ENCODE measurements at regions of chr4 and their contacts with region 1.

Region 1: DNA sequence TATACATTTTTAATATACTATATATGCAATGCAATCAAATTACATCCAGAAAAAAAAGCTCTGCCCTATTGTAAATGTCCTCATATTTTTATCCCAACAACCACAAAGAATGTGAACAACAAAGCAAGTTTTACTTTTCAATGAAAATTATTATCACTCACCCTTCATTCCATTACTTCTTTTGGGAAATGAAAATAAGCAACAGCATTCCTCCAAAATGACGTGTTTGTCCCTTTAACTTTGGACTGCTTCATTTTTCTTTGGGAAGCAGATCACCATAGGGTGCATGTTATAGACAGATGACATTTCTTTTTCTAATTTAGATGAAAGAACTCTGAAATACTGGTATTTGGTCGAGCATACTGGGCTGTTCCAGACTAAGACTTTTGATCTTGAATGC is 667.1 kb upstream of the BOD1L1 start:
- DNase-seq: no peak
- H3K4me3 ChIP-seq: no peak overlapping the region
- H3K27ac ChIP-seq: no peak overlapping the region
- H3K4me1 ChIP-seq: peaks cover 6% of the 10 kb centered on the region
- H3K27me3 ChIP-seq: no peaks in the 10 kb centered on the region
- CTCF ChIP-seq: no peak

Region 2: GRCh38 chr4:13944095-13944511 is 350.5 kb before region 1 on chr4:
- CTCF ChIA-PET with region 1: no interaction called
- dilution Hi-C with region 1: no loop called
- in situ Hi-C with region 1: no loop called
- intact Hi-C with region 1: loop called (anchors 1 kb)
- DNase-seq: peak; percentile 96
- H3K4me3 ChIP-seq: no peak overlapping the region
- H3K27ac ChIP-seq: no peak overlapping the region
- H3K4me1 ChIP-seq: peaks cover 15% of the 10 kb centered on the region
- H3K27me3 ChIP-seq: no peaks in the 10 kb centered on the region
- CTCF ChIP-seq: no peak

Region 3: DNA sequence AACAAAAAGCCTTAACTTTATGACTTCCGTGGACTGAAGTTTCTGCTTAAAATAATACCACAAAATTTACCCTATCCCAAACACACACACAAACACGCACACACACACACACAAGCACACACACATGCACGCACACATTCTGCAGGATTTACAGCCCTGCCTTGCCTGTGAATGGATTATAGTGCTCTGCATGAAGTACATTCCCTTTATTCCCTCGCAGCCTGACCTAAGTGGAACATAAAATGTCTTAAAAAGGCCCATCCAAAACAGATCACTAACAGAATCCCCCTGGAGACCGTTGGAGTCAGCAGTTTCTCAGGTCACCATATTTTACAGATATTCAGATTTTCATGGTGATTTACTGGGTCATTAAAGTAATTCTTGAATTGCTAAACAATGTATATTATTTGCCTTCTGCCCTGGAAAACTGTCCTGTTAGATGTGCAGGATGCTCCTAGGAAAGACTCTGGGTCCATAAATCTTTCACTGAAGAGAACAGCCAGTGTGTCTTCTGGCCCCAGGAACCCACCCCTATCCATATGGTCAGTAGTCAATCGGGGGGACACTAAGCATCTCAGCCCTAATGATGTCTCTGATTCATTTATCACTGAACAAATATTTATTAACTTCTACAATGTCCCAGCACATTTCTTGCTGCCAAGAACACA is 79.4 kb before region 1 on chr4:
- CTCF ChIA-PET with region 1: no interaction called
- dilution Hi-C with region 1: no loop called
- in situ Hi-C with region 1: no loop called
- intact Hi-C with region 1: no loop called
- DNase-seq: no peak
- H3K4me3 ChIP-seq: no peak overlapping the region
- H3K27ac ChIP-seq: no peak overlapping the region
- H3K4me1 ChIP-seq: peaks cover 11% of the 10 kb centered on the region
- H3K27me3 ChIP-seq: no peaks in the 10 kb centered on the region
- CTCF ChIP-seq: no peak

Region 4: GRCh38 chr4:14375816-14376215 is 81.2 kb after region 1 on chr4:
- CTCF ChIA-PET with region 1: no interaction called
- dilution Hi-C with region 1: loop called (anchors 5 kb)
- in situ Hi-C with region 1: no loop called
- intact Hi-C with region 1: no loop called
- DNase-seq: peak; percentile 71
- H3K4me3 ChIP-seq: no peak overlapping the region
- H3K27ac ChIP-seq: no peak overlapping the region
- H3K4me1 ChIP-seq: peaks cover 6% of the 10 kb centered on the region
- H3K27me3 ChIP-seq: no peaks in the 10 kb centered on the region
- CTCF ChIP-seq: no peak

Region 5: DNA sequence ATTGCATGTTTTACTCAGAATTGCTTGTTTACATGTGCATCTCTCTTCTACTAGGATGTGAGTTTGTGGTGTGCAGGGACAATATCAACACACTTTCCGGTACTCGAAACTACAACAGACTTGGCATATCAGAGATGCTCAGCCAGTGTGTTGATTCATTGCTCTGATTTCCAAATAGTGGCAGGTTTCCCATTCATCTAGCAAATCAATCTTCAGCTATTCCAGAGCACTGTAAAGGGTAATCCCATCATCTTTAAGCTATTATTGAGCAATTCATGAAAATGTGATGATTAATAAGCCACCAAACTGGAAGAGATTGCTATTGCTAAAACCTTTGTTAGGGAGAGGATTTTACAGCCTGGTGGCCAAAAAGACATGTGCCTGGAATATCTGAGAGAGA is 133.5 kb after region 1 on chr4:
- CTCF ChIA-PET with region 1: no interaction called
- dilution Hi-C with region 1: no loop called
- in situ Hi-C with region 1: no loop called
- intact Hi-C with region 1: loop called (anchors 1 kb)
- DNase-seq: peak; percentile 57
- H3K4me3 ChIP-seq: no peak overlapping the region
- H3K27ac ChIP-seq: no peak overlapping the region
- H3K4me1 ChIP-seq: peaks cover 17% of the 10 kb centered on the region
- H3K27me3 ChIP-seq: no peaks in the 10 kb centered on the region
- CTCF ChIP-seq: peak in 1 of 2 donors; percentile 28

Measured in mammary epithelial cell (primary cell).